ENCODE measurements at regions of chr9 and their contacts with region 1.

Region 1: DNA sequence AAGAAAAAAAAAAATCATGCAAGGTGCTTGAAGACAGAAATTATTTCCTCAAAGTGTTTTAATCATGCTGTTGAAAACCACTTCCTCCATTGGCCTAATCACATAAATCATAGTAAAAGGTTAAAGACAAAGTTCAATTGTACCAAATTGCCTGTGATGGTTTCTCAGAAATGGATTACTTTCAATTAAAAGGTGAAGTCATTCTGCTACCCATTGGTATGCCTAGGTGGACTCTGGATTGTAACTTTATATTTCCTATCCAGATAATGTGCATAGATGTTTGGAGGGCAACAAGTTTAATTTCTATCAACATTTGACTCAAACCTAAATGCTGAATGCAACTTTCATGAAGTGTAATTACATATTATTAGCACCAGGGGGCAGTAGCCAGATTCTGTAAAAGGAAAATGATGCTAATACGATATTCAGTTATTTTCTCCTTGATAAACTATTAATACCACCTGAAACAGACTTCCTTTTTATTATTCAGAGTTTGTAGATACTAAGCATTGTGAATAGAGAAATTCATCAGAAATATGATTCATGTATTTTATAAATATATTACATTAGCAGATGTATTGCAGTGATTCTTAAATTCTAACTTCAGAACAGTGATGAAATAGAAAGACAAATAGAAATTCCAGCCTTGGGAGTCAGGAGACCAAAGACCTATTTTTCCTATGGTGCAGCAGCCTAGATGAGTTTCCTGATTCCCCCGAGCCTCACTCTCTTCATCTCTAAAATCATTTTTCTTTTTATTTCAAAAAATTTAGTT is 148.2 kb downstream of the CAAP1 start:
- DNase-seq: no peak
- ATAC-seq: peak in 2 of 4 donors; percentile 43 to 46
- H3K4me3 ChIP-seq: no peak overlapping the region
- H3K27ac ChIP-seq: no peak overlapping the region
- H3K4me1 ChIP-seq: no peaks in the 10 kb centered on the region
- H3K27me3 ChIP-seq: no peaks in the 10 kb centered on the region
- CTCF ChIP-seq: peak; percentile 45 to 85 (median 65)

Region 2: GRCh38 chr9:26975693-26976059 is 231.3 kb after region 1 on chr9:
- intact Hi-C with region 1: loop called in 2 of 3 experiments (anchors 5 to 10 kb)
- DNase-seq: peak in 2 of 6 donors; percentile 22 to 55
- ATAC-seq: peak; percentile 64 to 88 (median 86)
- H3K4me3 ChIP-seq: no peak overlapping the region
- H3K27ac ChIP-seq: no peak overlapping the region
- H3K4me1 ChIP-seq: no peaks in the 10 kb centered on the region
- H3K27me3 ChIP-seq: no peaks in the 10 kb centered on the region
- CTCF ChIP-seq: peak; percentile 11 to 45 (median 34)

Region 3: GRCh38 chr9:27065288-27065687 is 320.9 kb after region 1 on chr9:
- intact Hi-C with region 1: no loop called
- DNase-seq: no peak
- ATAC-seq: no peak
- H3K4me3 ChIP-seq: no peak overlapping the region
- H3K27ac ChIP-seq: no peak overlapping the region
- H3K4me1 ChIP-seq: no peaks in the 10 kb centered on the region
- H3K27me3 ChIP-seq: no peaks in the 10 kb centered on the region
- CTCF ChIP-seq: no peak